CD4-positive, alpha-beta T cell (primary cell): ENCODE measurements at regions of chr19 and their contacts with region 1.

Region 1: DNA sequence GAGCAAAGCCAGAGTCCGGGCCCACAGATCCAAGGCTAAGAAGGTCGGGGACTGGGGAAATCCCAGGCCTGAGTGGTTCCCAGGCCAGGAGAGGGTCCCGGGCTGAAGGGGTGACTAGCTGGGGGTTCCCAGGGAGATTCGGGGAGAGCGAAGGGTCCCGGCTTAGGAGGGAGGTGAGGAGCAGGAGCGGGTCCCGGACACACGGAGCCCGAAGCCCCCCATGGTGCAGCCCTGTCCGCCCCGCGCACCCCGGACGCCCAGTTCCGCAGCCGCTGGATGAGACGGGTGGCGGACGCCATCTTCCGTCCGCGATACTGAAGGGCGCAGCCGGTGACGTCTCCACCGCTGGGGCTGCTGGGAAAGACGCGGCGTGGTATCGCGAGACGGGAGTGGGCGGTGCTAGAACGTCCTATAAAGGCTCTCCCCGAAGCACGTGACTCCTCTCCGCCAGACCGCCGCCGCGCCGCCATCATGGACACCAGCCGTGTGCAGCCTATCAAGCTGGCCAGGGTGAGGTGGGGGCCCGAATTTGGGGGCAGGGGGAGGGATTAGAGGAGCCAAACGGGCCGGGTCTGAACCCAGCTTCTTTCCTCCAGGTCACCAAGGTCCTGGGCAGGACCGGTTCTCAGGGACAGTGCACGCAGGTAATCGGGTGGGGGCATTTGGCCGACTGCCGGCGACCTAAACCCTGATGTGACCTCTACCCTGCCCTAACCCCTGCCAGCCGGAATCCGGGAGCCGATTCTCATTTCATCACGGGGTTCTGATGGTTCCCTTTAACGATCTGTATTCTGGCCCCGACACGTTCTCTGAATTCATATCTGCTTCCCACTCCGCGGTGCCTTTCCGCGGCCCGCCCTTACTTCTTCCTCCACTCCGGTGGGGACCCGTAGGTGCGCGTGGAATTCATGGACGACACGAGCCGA is at the starts of genes NDUFA7 and RPS28:
- DNase-seq: peak; percentile 95 to 99 (median 98)
- ATAC-seq: peak; percentile 94
- H3K4me3 ChIP-seq: peak within 1 kb of the TSS; percentile 100
- H3K4me3 Mint-ChIP-seq: peak within 1 kb of the TSS; percentile 96
- H3K27ac ChIP-seq: peak within 1 kb of the TSS; percentile 85 to 96
- H3K27ac Mint-ChIP-seq: peak within 1 kb of the TSS; percentile 97
- H3K4me1 ChIP-seq: peaks cover 33% of the 10 kb centered on the region
- H3K4me1 Mint-ChIP-seq: peaks cover 41% of the 10 kb centered on the region
- H3K27me3 ChIP-seq: no peaks in the 10 kb centered on the region
- H3K27me3 Mint-ChIP-seq: no peaks in the 10 kb centered on the region
- CTCF ChIP-seq: peak; percentile 16
- total RNA-seq, gene NDUFA7: 42.0 to 42.7 TPM
- total RNA-seq, gene RPS28: 3,333 to 3,342 TPM

Region 2: DNA sequence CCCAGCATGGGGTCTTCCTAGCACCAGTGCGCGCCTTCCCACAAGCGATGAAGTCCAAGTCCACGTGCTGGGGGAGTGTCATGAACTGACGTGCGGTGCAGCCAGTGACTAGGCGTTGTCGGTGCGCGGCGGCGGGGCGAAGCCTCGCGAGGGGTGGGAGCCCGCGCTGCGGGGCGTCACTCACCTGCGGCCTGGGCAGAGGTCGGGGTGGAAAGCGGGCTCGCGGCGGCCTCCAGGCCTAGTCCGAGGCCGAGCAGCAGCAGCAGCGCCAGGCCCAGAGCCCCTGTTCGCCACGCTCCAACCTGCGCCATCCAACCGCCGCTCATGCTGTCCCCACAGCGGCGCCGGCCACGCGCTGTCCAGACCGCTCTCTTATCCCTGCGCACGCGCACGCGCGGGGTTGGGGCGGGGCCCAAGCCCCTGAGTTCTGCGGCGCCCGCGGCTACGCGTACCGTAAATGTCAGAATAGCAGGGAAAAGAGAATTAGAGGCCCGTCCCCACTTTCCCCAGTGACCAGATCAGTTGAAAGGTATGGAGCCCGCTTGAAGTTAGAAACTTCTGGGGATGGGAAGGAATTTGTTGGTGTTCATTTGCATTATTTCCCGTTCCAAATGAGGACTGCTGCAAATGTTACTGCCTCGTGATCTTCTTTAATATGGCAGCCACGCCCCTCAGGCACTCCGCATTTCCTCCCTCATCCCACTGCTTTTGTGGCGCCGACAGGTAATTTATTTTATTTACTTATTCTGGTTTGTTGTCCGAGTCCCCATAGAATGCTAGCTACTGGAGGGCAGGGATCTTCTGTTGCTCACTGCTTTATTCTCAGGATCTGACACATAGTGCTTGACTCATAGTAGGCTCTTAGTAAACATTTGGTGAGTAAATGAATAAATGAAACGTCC is 13.1 kb before region 1 on chr19 and contains the start of gene CD320:
- CTCF ChIA-PET with region 1: interaction called, 3 read pairs
- POLR2A ChIA-PET with region 1: interaction called, 5 read pairs
- intact Hi-C with region 1: loop called in 1 of 2 experiments (anchors 1 kb)
- DNase-seq: peak; percentile 66 to 92 (median 81)
- ATAC-seq: peak; percentile 83
- H3K4me3 ChIP-seq: peak within 1 kb of the TSS; percentile 67
- H3K4me3 Mint-ChIP-seq: peak within 1 kb of the TSS; percentile 93
- H3K27ac ChIP-seq: peak within 1 kb of the TSS; percentile 52 to 72
- H3K27ac Mint-ChIP-seq: peak within 1 kb of the TSS; percentile 83
- H3K4me1 ChIP-seq: peaks cover 47% of the 10 kb centered on the region
- H3K4me1 Mint-ChIP-seq: peaks cover 39% of the 10 kb centered on the region
- H3K27me3 ChIP-seq: no peaks in the 10 kb centered on the region
- H3K27me3 Mint-ChIP-seq: no peaks in the 10 kb centered on the region
- CTCF ChIP-seq: no peak
- total RNA-seq, gene CD320: 17.1 to 17.6 TPM

Region 3: DNA sequence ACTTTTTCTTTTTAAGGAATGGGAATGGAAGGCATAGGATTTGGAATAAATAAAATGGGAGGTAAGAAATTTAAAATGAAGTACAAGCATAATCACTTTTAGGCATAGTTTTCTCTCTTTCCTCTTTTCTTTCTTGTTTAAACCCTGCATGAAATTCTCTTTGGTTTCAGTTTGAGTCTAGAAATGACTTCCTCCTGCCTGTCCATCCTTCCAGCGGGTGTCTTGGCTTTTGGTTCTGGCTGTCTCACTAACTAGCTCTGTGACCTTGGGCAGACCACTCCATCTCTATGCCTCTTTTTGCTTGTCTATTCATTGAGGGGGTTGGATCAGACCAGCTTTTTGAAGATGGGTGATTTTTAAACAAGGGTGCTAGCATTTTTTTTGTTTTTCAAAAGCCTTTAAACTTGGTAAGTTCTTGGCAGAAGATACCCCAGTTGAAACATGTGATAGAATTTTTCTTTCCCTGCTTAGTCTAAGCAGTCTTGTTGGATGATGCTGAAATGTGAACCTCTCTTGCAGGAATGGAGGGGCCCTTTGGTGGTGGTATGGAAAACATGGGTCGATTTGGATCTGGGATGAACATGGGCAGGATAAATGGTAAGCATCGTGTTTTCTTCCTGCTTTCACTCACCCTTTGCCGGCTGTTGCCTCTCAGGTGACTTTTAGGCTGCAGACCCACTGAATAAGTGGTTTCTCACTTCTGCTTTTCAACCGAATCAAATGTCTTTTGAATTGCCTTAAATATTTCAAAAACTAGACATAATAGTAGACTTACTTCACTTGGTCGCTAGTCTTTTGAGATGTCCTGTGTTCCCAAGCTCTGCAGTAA is 152.5 kb after region 1 on chr19:
- CTCF ChIA-PET with region 1: no interaction called
- POLR2A ChIA-PET with region 1: no interaction called
- intact Hi-C with region 1: no loop called
- DNase-seq: no peak
- ATAC-seq: no peak
- H3K4me3 ChIP-seq: no peak overlapping the region
- H3K4me3 Mint-ChIP-seq: peak overlapping the region; percentile 38
- H3K27ac ChIP-seq: peak overlapping the region in 1 of 2 donors; percentile 29
- H3K27ac Mint-ChIP-seq: peak overlapping the region; percentile 34
- H3K4me1 ChIP-seq: peaks cover 16% of the 10 kb centered on the region
- H3K4me1 Mint-ChIP-seq: peaks cover 72% of the 10 kb centered on the region
- H3K27me3 ChIP-seq: no peaks in the 10 kb centered on the region
- H3K27me3 Mint-ChIP-seq: no peaks in the 10 kb centered on the region
- CTCF ChIP-seq: no peak